ENCODE measurements at regions of chr16 and their contacts with region 1.

Region 1: DNA sequence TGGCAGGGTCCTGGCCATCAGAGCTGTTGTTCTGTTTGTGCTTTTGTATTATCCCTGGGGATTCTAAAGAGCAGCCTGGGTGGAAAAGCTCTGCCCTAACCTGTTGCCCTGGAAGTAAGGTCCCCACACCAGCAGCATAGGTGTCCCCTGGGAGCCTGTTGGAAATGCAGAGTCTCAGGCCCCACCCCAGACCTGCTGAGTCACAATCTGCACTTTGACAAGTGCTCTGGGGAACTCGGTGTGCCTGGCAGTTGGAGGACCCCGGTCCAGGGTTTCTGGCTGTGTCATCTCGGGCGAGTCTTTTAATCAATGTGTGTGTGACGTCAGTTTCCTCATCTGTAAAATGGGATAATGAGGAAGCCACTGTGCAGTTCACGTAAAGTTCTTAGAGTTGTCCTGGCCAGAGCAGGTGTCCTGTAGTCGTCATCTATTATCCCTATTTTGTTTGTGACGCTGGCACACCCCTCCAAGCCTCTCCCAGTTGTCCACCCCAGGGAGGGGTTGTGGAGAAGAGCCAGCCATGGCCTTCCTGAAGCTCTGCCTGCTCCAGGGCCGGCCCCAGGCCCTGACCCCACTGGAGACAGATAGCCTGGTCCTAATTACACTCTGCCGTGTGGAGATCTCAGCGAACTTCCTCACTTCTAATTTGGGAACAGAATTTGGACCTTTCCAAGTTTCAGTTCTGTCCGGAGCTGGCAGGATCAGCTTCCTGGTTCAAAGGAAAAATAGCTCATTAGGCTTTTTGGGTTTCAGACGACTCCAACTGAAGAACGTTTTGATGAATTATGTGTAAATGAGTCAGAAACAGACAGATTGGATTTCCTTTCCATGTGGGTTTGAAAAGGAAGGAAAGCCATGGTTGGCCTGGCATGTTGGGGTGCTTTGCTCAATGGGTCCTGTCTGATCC is 295.7 kb upstream of the FOXF1 start:
- DNase-seq: peak in 1 of 2 donors; percentile 67
- H3K4me3 ChIP-seq: no peak overlapping the region
- CTCF ChIP-seq: no peak
- POLR2A ChIP-seq: no peak

Region 2: GRCh38 chr16:85046931-85047866 is 1167.4 kb before region 1 on chr16:
- intact Hi-C with region 1: loop called (anchors 10 kb)
- DNase-seq: no peak
- H3K4me3 ChIP-seq: no peak overlapping the region
- CTCF ChIP-seq: no peak
- POLR2A ChIP-seq: no peak

Region 3: GRCh38 chr16:86078121-86078600 is 136.4 kb before region 1 on chr16:
- intact Hi-C with region 1: no loop called
- DNase-seq: peak in 1 of 2 donors; percentile 46
- H3K4me3 ChIP-seq: no peak overlapping the region
- CTCF ChIP-seq: no peak
- POLR2A ChIP-seq: no peak

Region 4: DNA sequence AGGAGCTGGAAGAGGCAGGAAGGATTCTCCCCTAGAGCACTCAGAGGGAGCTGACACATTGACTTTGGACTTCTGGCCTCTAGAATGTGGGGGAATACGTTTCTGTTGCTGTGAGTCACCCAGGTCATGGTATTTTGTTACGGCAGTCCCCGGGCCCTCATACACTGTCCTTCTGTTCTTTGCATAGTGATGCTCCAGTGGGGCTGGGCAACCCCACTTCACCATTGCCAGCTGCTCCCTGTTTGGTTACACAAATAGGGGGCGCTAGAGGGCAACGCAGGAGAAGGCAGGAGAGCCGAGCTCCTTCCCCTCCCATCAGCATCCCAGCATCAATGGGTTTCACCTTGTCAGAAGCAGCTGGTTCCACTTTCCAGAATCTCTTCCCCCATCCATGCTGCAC is 38.0 kb after region 1 on chr16:
- intact Hi-C with region 1: no loop called
- DNase-seq: peak in 1 of 2 donors; percentile 49
- H3K4me3 ChIP-seq: no peak overlapping the region
- CTCF ChIP-seq: no peak
- POLR2A ChIP-seq: no peak